ENCODE measurements at regions of chr12 and their contacts with region 1.

Region 1: DNA sequence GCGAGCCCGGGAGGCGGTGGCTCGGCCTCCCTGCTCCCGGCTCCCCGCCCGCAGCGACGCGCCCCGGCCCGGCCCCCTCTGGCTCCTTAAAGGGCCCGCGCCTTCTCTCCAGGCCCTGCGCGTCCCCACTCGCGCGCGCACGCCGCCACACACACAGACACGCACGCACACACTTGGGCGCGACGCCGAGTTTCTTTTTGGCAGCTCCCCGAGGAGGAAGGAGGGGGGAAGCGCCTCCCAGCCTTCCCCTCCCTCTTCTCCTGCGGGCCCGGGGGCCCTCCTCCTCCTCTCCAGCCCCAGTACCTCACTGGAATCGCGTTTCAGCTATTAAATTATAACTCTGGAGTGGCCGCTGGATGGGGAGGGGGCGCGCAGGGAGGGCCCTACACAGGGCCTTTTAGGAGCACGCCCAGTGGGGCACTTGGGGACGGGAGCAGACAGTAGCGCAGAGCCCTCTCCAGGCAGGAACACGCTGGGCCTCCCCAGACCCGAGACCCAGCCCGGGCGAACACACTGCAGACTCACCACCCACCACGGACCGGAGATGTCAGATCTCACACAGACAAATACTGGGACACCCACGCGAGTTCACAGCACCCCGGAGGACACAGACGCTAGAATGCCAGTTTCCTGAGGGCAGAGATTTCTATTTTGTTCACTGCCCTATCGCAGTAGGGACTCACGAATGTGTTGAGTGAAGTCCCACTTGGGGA is 405 bp upstream of the NCOR2 start:
- DNase-seq: no peak
- ATAC-seq: peak; percentile 83
- H3K4me3 ChIP-seq: peak overlapping the region; percentile 42 to 53
- H3K27ac ChIP-seq: peak overlapping the region; percentile 91
- H3K4me1 ChIP-seq: peaks cover 34% of the 10 kb centered on the region
- H3K27me3 ChIP-seq: no peaks in the 10 kb centered on the region
- CTCF ChIP-seq: no peak

Region 2: DNA sequence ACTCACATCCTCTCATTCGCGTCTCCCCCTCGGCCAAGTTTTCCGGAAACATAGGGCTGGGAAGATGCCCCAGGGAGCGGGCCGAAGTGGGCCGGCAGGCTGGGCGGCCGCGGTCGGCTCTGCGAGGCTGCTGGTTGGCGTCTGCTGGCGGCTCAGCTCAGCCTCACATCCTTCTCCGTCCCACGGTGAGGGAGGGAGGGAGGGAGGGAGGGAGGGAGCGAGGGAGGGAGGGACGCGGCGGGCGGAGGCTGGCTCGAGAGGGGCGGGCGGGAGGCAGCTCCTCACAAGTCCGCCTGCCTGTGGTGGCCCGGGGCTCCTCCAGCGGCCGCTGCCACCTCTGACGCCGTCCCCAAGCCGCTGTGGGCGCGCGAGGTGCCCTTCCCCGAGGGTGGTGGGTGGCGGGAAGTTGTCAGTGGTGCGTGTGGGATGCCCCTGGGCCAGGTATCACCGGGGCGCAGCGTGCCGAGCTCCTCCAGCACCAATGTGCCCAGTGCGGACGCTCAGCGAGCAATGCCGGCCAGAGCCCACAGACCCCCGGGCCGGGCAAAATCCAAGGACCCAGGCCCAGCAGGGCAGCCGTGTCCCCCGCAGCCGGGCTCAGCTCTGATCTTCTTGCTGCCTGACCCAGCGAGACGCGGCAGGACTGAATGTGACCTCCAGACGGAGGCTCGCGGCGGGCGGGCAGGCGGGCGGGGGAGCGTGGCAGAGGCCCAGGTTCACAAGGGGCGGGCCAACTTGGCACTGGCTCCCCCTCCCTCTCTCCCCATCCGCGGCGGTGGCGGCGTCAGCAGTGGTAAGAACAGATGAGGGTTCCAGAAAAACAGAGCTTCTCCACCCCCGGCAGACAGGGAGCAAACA is 178.9 kb before region 1 on chr12:
- CTCF ChIA-PET with region 1: interaction called, 3 read pairs
- POLR2A ChIA-PET with region 1: no interaction called
- in situ Hi-C with region 1: no loop called
- intact Hi-C with region 1: loop called (anchors 10 kb)
- DNase-seq: no peak
- ATAC-seq: peak; percentile 59
- H3K4me3 ChIP-seq: peak overlapping the region; percentile 72 to 86
- H3K27ac ChIP-seq: peak overlapping the region; percentile 94
- H3K4me1 ChIP-seq: peaks cover 73% of the 10 kb centered on the region
- H3K27me3 ChIP-seq: no peaks in the 10 kb centered on the region
- CTCF ChIP-seq: no peak

Region 3: GRCh38 chr12:124592472-124593160 is 24.8 kb after region 1 on chr12:
- CTCF ChIA-PET with region 1: no interaction called
- POLR2A ChIA-PET with region 1: no interaction called
- in situ Hi-C with region 1: no loop called
- intact Hi-C with region 1: no loop called
- DNase-seq: no peak
- ATAC-seq: no peak
- H3K4me3 ChIP-seq: no peak overlapping the region
- H3K27ac ChIP-seq: no peak overlapping the region
- H3K4me1 ChIP-seq: no peaks in the 10 kb centered on the region; the same call in 1 of the 2 replicates
- H3K27me3 ChIP-seq: no peaks in the 10 kb centered on the region
- CTCF ChIP-seq: no peak

Region 4: GRCh38 chr12:124680863-124681778 is 113.3 kb after region 1 on chr12:
- CTCF ChIA-PET with region 1: no interaction called
- POLR2A ChIA-PET with region 1: no interaction called
- in situ Hi-C with region 1: no loop called
- intact Hi-C with region 1: loop called (anchors 5 kb)
- DNase-seq: peak; percentile 91
- ATAC-seq: peak; percentile 83
- H3K4me3 ChIP-seq: peak overlapping the region in 1 of 2 experiments; percentile 15; a peak in 2 of 4 replicates
- H3K27ac ChIP-seq: peak overlapping the region; percentile 98
- H3K4me1 ChIP-seq: peaks cover 87% of the 10 kb centered on the region
- H3K27me3 ChIP-seq: no peaks in the 10 kb centered on the region
- CTCF ChIP-seq: no peak

Region 5: GRCh38 chr12:124727264-124727721 is 159.5 kb after region 1 on chr12:
- CTCF ChIA-PET with region 1: no interaction called
- POLR2A ChIA-PET with region 1: no interaction called
- in situ Hi-C with region 1: no loop called
- intact Hi-C with region 1: loop called (anchors 10 kb)
- DNase-seq: no peak
- ATAC-seq: peak; percentile 84
- H3K4me3 ChIP-seq: peak overlapping the region in 1 of 2 experiments; percentile 14; a peak in 2 of 4 replicates
- H3K27ac ChIP-seq: peak overlapping the region; percentile 93
- H3K4me1 ChIP-seq: peaks cover 46% of the 10 kb centered on the region
- H3K27me3 ChIP-seq: no peaks in the 10 kb centered on the region
- CTCF ChIP-seq: no peak

Region 6: DNA sequence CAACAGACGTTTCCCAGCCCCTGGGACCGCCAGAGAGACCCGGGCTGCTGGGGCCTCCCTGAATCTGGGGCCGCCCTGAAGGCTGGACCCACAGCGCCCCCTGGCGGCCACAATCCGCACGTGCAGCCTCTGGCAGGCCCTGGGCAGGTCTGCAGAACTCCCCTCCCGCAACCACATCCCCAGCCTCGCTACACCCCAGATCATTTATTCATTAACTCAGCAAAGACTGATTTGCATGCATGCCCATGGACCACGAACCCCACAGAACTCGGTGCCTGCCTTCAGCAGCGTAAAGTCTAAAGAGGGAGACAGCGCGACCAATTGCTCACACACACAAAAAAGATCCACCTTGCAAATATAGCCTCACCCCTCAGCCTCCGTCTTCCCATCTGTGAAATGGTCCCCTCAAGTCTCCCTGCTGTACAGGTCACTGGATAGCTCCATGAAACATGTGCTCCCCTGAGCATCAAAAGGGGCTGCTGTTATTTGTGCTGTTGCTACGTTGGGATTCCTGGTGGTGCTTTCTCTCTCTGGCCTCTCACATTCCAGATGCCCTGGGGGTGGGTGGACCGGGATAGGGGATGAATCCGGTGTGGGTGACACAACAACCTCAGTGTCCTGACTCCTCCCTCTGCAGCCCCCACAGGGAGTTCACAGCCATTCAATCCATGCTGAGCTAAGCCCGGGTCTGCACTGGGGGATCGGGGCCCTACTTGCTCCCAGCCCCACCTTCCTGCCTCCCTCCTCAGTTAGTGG is 199.4 kb after region 1 on chr12:
- CTCF ChIA-PET with region 1: interaction called, 3 read pairs
- POLR2A ChIA-PET with region 1: no interaction called
- in situ Hi-C with region 1: no loop called
- intact Hi-C with region 1: loop called (anchors 10 kb)
- DNase-seq: no peak
- ATAC-seq: peak; percentile 85
- H3K4me3 ChIP-seq: no peak overlapping the region
- H3K27ac ChIP-seq: 0 out of 2 replicates have a peak overlapping the region, but pooled peaks have one; percentile 3
- H3K4me1 ChIP-seq: peaks cover 32% of the 10 kb centered on the region
- H3K27me3 ChIP-seq: no peaks in the 10 kb centered on the region
- CTCF ChIP-seq: peak; percentile 98

Measured in Panc1 (cell line).